Activated naive CD4-positive, alpha-beta T cell treated with anti-CD3 and anti-CD28 coated beads for 36 hours (primary cell): ENCODE measurements at regions of chr2 and their contacts with region 1.

Region 1: GRCh38 chr2:86195055-86195807 is at the start of gene IMMT:
- DNase-seq: peak; percentile 96
- H3K4me3 Mint-ChIP-seq: peak within 1 kb of the TSS; percentile 89
- H3K27ac Mint-ChIP-seq: peak within 1 kb of the TSS; percentile 90
- H3K4me1 Mint-ChIP-seq: peaks cover 47% of the 10 kb centered on the region
- H3K27me3 Mint-ChIP-seq: no peaks in the 10 kb centered on the region
- total RNA-seq, gene IMMT: 164 to 168 TPM

Region 2: DNA sequence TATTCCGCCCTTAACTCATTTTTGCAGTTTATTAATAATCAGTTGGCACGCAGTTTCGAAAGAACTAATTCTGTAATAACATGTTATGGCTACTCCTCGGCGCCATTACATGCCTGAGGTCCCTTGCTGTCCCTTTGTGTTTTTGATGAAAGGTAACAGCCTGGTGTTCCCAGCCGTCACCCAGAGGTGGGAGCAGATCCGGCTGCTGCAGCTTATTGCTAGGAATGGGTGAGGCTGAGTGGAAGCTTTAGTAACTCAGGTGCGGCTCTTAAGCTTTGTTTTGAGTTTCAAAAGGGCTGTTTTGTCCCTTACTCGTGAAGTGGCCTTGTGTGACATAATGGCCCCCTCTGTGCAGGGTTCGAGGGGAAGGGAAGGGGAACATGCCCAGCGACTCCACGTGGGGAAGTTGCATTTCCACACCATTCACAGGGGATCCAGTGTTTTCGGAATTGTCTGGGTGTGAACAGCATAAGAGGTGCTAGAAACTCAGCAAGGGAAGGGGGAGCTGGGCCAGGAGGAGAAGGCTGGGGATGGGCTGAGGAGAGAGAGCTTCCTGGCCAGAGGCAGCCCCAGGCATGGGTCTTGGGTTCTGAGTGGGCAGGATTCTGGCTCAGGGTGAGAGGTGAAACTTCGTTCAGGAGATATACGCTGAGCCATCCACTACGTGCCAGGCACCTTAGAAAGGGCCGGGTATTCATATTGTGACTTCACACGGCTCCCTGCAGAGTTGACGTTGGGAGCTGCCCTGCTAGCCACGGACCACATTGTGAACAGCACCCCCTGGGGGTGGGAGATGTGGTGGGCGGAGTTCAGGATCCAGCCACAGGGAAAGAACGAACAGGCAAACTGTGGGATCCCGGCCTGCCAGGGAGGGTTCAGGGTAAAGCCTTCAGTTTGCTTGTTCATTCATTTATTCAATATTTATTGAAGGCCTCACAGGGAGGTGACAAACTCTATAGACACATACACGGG is 951.8 kb before region 1 on chr2:
- CTCF ChIA-PET with region 1: no interaction called
- intact Hi-C with region 1: no loop called
- DNase-seq: peak; percentile 47
- H3K4me3 Mint-ChIP-seq: no peak overlapping the region
- H3K27ac Mint-ChIP-seq: no peak overlapping the region
- H3K4me1 Mint-ChIP-seq: peaks cover 7% of the 10 kb centered on the region
- H3K27me3 Mint-ChIP-seq: no peaks in the 10 kb centered on the region

Region 3: DNA sequence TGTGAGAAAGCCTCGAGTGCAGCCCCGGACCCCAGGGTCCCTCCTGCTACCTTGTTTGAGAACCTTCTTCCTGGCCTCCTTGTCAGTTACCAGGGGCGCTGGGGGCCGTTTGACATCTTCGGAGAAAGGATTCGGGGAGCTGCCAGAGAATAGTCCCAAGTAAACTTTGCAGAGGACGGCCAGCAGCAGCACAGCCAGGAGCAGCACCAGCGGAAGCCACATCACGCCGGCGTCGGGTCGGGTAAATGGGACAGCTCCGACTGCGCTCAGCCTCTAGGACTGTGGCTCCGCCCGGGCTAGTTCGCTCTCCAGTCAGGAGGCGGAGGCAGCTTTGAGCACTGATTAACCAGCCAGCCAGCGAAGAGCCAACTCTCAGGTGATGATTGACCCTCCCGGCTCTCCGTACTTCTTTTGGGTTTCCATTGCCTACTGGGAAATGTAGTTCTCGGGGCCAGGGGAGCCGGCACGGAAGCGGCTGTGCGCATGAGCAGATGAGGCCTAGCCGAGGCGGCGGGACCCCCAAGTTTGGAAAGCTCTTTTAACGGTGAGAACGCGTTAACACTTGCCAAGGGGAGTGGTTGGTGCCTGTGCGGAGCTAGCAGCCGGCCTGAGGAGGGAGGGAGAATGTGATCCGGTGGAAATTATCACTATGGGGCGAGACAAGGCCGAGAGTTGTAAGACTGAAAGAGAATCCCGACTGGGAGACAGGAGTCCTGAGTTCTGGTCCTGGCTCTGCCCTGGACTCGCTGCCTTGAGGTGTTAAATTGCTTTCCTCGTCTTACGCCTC is 840.8 kb before region 1 on chr2 and contains the starts of genes ELMOD3 and RETSAT:
- CTCF ChIA-PET with region 1: no interaction called
- intact Hi-C with region 1: loop called (anchors 10 kb)
- DNase-seq: peak; percentile 99
- H3K4me3 Mint-ChIP-seq: peak within 1 kb of the TSS; percentile 99
- H3K27ac Mint-ChIP-seq: peak within 1 kb of the TSS; percentile 96
- H3K4me1 Mint-ChIP-seq: peaks cover 36% of the 10 kb centered on the region
- H3K27me3 Mint-ChIP-seq: no peaks in the 10 kb centered on the region
- total RNA-seq, gene ELMOD3: 14.8 to 15.4 TPM
- total RNA-seq, gene RETSAT: 19.7 to 24.5 TPM

Region 4: DNA sequence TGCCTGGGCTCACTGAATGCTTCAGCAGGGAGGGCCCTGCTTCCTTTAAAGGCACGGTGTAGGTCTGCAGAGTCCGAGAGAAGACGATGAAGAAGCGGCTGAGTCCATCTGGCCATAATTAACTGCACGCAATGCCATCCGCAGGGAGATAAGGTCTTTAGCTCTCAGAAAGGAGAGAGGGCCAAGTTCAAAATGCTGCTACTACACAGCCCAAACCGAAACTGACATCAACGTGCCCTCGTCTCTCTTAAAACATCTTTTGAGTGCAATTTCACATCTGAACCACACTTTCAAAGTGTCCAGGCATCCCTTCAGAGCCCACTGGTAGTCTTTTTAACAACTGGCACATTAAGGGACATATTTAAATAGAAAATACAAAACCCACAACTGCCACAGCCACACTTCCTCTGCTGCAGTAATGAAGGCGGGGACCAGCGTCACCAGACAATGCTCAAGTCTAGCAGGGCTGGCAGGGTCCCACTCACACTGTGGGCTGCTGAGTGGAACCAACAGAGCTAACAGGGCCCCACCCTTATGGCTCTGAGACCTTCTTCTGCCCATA is 342.2 kb before region 1 on chr2:
- CTCF ChIA-PET with region 1: no interaction called
- intact Hi-C with region 1: loop called (anchors 10 kb)
- DNase-seq: peak; percentile 70
- H3K4me3 Mint-ChIP-seq: peak overlapping the region; percentile 74
- H3K27ac Mint-ChIP-seq: peak overlapping the region; percentile 98
- H3K4me1 Mint-ChIP-seq: peaks cover 70% of the 10 kb centered on the region
- H3K27me3 Mint-ChIP-seq: no peaks in the 10 kb centered on the region

Region 5: GRCh38 chr2:86221066-86221684 is 25.9 kb after region 1 on chr2:
- CTCF ChIA-PET with region 1: interaction called, 3 read pairs
- intact Hi-C with region 1: loop called (anchors 1 kb)
- DNase-seq: peak; percentile 80
- H3K4me3 Mint-ChIP-seq: no peak overlapping the region
- H3K27ac Mint-ChIP-seq: no peak overlapping the region
- H3K4me1 Mint-ChIP-seq: peaks cover 16% of the 10 kb centered on the region
- H3K27me3 Mint-ChIP-seq: no peaks in the 10 kb centered on the region

Region 6: DNA sequence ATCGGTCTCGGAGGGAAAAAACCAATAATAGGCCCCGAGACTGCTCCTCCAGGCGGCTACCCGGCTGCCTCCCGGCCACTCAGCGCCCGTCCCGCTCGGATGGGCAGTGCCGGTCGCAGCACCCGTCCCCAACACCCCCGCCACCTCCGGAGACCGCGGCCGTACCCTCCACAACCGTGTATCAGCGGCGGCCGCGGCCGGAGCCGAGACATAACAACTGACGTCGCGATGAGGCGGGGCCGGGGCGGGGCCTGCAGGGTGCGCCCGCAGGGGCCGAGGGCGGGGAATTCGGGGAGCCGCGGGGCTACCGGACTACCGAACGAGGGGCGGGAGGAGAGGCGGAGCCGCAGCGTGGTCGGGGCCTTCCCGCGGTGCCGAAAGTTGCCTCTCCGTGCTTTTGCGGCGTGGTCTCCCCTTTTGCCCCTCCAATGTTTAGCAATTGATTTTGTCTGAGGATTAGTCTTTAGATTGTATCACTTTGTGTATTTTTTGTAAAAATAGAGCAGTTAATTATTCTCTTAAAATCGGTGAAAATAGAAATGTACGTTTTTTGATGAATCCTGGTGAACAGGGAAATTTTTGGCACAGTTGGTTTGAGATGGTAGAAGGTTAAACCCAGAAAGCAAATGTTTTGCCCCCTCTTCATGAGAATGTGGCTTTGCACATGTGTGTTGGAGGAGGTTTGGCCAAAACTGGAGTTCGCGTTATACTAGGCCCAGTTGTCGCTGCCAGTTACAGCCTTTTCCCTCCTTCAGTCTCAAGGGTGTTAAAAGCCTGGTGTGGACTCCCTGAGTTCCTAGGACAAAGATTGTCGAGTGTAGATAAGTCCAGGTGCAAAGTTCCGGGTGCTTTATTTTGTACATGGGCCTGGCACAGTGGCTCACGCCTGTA is 428.7 kb after region 1 on chr2 and contains the start of gene RNF103:
- CTCF ChIA-PET with region 1: no interaction called
- intact Hi-C with region 1: loop called (anchors 10 kb)
- DNase-seq: peak; percentile 94
- H3K4me3 Mint-ChIP-seq: peak within 1 kb of the TSS; percentile 92
- H3K27ac Mint-ChIP-seq: peak within 1 kb of the TSS; percentile 93
- H3K4me1 Mint-ChIP-seq: peaks cover 18% of the 10 kb centered on the region
- H3K27me3 Mint-ChIP-seq: peaks cover 4% of the 10 kb centered on the region
- total RNA-seq, gene RNF103: 10.7 to 11.8 TPM